Heart right ventricle (tissue), 16 donors: ENCODE measurements at regions of chr15 and their contacts with region 1.

Region 1: DNA sequence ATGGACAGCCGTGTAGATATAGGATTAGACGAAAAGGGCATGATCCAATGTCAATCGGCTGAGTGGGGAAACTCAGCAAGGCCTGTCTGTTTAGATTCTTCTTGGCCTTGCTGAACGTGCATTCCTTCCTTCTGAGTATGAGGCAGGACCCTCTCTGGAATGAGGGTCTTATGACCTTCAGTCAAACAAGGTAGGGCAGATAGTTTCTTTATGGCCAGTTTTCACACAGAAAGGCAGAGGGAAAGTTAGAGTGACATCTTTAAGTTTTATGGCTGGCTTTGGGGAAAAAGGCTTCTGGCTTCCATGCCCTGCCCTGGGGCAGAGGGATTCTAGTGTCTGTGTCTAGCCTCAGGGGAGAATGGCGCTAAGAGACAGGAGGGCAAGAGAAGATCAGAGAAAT is 29.7 kb downstream of the ARNT2 start:
- DNase-seq: no peak
- ATAC-seq: no peak
- H3K4me3 ChIP-seq: no peak overlapping the region
- H3K27ac ChIP-seq: no peak overlapping the region
- H3K4me1 ChIP-seq: no peaks in the 10 kb centered on the region
- H3K27me3 ChIP-seq: peaks cover 0 to 8% (median 0%) of the 10 kb centered on the region in 7 donors
- CTCF ChIP-seq: no peak

Region 2: DNA sequence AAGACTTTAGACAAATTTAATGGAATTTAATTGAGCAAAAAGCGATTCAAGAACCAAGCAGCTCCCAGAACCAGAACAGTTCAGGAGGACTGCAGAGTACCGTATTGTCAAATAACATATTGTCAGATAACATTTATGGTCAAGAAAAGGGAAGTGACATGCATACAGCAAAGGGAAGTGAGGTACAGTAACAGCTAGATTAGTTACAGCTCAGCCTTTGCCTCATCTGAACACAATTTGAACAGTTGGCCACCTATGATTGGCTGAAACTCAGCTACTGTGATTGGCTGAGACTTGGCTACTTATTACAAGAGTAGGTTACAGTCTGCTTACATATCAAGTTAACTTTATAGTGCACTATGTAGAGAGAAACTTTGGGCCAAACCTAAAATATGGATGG is 352.4 kb before region 1 on chr15:
- intact Hi-C with region 1: no loop called
- DNase-seq: no peak
- ATAC-seq: peak in 1 of 8 donors; percentile 22
- H3K4me3 ChIP-seq: no peak overlapping the region
- H3K27ac ChIP-seq: no peak overlapping the region
- H3K4me1 ChIP-seq: peaks cover 0 to 11% (median 9%) of the 10 kb centered on the region in 9 donors
- H3K27me3 ChIP-seq: no peaks in the 10 kb centered on the region
- CTCF ChIP-seq: no peak

Region 3: DNA sequence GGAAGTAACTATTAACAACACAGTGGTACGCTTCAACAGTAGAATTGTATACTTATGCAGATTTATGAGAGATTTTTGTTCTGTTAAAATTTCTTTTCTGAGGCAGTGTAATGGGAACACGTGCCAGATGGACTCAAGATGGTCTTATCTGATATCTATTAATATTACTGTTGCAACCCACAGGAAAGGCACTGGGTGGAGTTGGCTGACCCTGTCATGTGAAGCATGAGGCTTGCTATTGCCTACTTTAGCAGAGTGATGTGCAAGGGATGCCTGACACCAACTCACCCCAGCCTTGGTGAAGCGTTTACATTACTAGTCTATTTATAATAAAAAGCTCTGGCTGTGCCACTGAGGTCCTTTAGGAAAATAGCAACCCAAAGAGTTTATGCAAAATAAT is 49.4 kb before region 1 on chr15:
- intact Hi-C with region 1: no loop called
- DNase-seq: no peak
- ATAC-seq: no peak
- H3K4me3 ChIP-seq: no peak overlapping the region
- H3K27ac ChIP-seq: no peak overlapping the region
- H3K4me1 ChIP-seq: no peaks in the 10 kb centered on the region
- H3K27me3 ChIP-seq: peaks cover 0 to 26% (median 5%) of the 10 kb centered on the region in 7 donors
- CTCF ChIP-seq: no peak

Region 4: DNA sequence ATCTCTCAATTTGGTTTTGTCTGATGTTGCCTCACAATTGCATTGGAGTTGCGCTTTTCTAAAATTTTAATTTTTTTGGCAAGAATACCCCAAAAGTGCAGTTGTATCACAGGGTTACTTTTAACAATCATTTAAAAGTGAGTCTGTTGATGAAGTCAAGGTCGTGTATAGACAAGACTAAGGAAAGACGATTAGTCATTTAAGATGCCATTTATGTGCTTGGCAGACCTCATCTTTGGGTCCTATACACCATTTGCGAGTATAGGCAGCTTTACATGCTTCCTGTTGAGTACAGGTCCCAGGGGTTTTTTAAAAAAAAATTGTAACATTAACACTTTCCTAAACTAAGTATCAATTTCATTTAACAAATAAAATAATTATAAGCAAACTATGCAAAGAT is 17.1 kb before region 1 on chr15:
- intact Hi-C with region 1: loop called in 1 of 10 experiments (anchors 1 kb)
- DNase-seq: no peak
- ATAC-seq: no peak
- H3K4me3 ChIP-seq: no peak overlapping the region
- H3K27ac ChIP-seq: no peak overlapping the region
- H3K4me1 ChIP-seq: no peaks in the 10 kb centered on the region
- H3K27me3 ChIP-seq: peaks cover 0 to 5% (median 0%) of the 10 kb centered on the region in 7 donors
- CTCF ChIP-seq: no peak